ENCODE measurements at regions of chr2 and their contacts with region 1.

Region 1: DNA sequence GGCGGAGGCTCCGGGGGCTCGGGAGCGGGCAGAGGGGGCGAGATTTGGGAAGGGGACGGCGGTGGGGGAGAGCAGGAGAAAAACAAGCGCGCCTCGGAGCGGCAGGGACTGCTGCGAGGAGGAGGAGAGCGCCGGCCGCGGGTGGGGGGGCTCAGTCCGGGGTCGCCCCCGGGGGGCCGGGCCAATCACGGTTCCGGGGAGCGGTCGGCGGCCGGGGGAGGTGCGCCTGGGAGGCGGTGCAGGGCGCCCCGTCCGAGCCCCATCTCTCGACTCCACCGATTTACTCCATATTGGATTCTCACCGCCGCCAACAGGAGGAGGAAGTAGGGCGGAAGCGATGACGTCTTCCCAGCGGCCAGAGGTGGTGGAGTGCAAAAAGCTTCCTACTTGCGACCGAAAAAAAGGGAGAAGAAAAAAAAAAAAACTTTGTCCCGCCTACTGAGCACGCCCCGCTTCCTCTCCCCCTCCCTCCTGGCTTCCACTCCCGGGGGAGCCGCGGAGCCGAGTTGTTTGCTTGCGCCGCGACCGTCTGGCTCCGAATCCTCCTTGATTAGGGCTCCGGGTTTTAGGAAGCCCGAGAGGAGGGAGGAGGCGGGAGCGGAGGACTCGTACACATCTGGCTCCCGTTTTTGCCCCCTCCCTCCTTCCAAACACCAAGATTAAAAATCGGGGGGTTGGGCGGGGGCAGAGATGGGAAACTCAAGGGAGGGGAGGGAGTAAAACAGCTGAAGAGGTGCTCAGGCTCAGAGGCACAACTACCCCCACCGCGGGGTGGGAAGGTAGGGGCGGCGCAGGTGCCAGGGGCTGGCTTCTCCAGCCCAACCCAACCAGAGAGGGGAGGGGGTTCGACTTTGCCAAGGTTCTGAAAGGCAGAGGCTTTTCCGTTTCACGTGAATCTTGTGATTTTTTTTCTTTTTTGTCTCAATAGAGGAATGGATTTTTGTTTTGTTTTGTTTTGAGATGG is at the start of gene SPRED2:
- DNase-seq: peak; percentile 93
- H3K4me3 Mint-ChIP-seq: peak within 1 kb of the TSS; percentile 97
- H3K27ac Mint-ChIP-seq: peak within 1 kb of the TSS; percentile 89
- H3K4me1 Mint-ChIP-seq: peaks cover 31% of the 10 kb centered on the region
- H3K27me3 Mint-ChIP-seq: peaks cover 36% of the 10 kb centered on the region
- total RNA-seq, gene SPRED2: 7.7 and 9.2 TPM in 2 replicates

Region 2: GRCh38 chr2:65056215-65057053 is 376.1 kb before region 1 on chr2 and contains the start of gene CEP68:
- intact Hi-C with region 1: loop called (anchors 2 kb)
- DNase-seq: peak; percentile 99
- H3K4me3 Mint-ChIP-seq: peak within 1 kb of the TSS; percentile 97
- H3K27ac Mint-ChIP-seq: peak within 1 kb of the TSS; percentile 87
- H3K4me1 Mint-ChIP-seq: peaks cover 50% of the 10 kb centered on the region
- H3K27me3 Mint-ChIP-seq: peaks cover 2% of the 10 kb centered on the region
- total RNA-seq, gene CEP68: 4.4 and 4.9 TPM in 2 replicates

Region 3: GRCh38 chr2:65227425-65228262 is 204.9 kb before region 1 on chr2 and contains the start of gene ACTR2:
- intact Hi-C with region 1: loop called (anchors 1 kb)
- DNase-seq: peak; percentile 99
- H3K4me3 Mint-ChIP-seq: peak within 1 kb of the TSS; percentile 97
- H3K27ac Mint-ChIP-seq: peak within 1 kb of the TSS; percentile 98
- H3K4me1 Mint-ChIP-seq: peaks cover 28% of the 10 kb centered on the region
- H3K27me3 Mint-ChIP-seq: peaks cover 1% of the 10 kb centered on the region
- total RNA-seq, gene ACTR2: 298 TPM in 2 replicates

Region 4: GRCh38 chr2:65300761-65301711 is 131.5 kb before region 1 on chr2:
- intact Hi-C with region 1: loop called (anchors 1 kb)
- DNase-seq: peak; percentile 91
- H3K4me3 Mint-ChIP-seq: peak overlapping the region; percentile 82
- H3K27ac Mint-ChIP-seq: peak overlapping the region; percentile 93
- H3K4me1 Mint-ChIP-seq: peaks cover 50% of the 10 kb centered on the region
- H3K27me3 Mint-ChIP-seq: peaks cover 30% of the 10 kb centered on the region

Region 5: DNA sequence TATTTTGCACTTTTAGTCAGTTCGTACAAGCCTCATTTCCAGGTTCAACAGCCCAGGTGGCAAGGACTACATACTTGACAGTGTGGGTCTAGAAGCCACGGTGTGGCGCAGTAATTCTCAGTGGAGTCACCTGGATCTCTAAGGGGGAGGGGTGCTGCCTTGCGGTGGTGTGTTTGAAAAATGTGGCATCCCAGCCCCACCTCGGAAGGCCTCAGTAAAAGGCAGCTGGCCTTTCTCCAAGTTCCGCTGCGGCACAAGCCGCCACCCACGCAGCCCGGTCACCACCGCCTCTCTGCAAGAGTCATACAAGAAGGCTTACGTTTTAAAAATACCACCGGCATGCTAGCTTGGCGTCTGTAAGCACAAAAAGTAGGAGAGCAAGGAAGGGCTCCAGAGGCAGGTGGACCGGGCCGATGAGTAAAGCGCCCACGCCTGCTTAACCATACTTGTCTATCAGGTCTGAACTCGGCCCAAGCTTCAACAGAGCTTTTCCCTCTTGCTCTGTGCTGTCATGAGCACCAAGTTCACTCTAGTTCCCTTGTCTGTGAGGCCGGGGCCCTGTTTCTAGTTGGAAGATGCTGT is 49.6 kb before region 1 on chr2:
- intact Hi-C with region 1: loop called (anchors 1 kb)
- DNase-seq: peak; percentile 89
- H3K4me3 Mint-ChIP-seq: peak overlapping the region; percentile 42
- H3K27ac Mint-ChIP-seq: peak overlapping the region; percentile 68
- H3K4me1 Mint-ChIP-seq: peaks cover 40% of the 10 kb centered on the region
- H3K27me3 Mint-ChIP-seq: peaks cover 8% of the 10 kb centered on the region

Region 6: GRCh38 chr2:65554765-65555591 is 122.5 kb after region 1 on chr2:
- intact Hi-C with region 1: loop called (anchors 5 kb)
- DNase-seq: no peak
- H3K4me3 Mint-ChIP-seq: no peak overlapping the region
- H3K27ac Mint-ChIP-seq: peak overlapping the region; percentile 57
- H3K4me1 Mint-ChIP-seq: peaks cover 16% of the 10 kb centered on the region
- H3K27me3 Mint-ChIP-seq: peaks cover 30% of the 10 kb centered on the region

Measured in activated CD4-positive, alpha-beta T cell treated with anti-CD3 and anti-CD28 coated beads, Interleukin-2, amount 10 ng/mL, durations not matched to agents 24 days and 14 days (primary cell).